ENCODE measurements at regions of chr7 and their contacts with region 1.

Region 1: DNA sequence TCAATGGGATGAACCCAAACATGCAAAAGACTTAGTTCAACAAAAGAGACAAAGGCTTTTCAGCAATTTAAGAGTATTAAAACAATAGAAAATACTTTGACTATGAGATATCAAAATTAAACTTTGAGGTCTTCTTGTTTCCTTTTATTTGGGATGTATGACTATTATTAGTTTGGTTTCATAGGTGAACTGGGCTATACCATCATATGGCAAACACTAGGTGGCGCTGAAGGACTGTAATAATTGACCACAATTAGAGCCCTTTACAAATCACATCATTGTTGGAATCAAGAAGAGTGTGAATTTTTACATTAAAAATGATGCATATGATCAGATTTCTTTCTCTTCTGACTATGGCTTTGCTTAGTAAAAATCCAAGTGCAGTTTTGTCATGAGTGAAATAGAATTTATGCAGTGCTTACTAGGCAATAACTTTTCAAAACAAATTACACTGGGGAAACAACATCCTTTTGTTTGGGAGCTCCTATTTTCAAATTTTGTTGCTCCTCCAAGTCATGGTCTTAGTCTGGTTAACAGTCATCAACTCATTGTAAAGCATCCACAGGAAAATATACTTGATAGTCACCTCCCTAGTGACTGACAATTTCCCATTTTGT is 14.7 kb upstream of the NXPH1 start:
- DNase-seq: no peak
- H3K4me3 Mint-ChIP-seq: no peak overlapping the region
- H3K27ac Mint-ChIP-seq: no peak overlapping the region
- H3K4me1 Mint-ChIP-seq: no peaks in the 10 kb centered on the region
- H3K27me3 Mint-ChIP-seq: no peaks in the 10 kb centered on the region

Region 2: DNA sequence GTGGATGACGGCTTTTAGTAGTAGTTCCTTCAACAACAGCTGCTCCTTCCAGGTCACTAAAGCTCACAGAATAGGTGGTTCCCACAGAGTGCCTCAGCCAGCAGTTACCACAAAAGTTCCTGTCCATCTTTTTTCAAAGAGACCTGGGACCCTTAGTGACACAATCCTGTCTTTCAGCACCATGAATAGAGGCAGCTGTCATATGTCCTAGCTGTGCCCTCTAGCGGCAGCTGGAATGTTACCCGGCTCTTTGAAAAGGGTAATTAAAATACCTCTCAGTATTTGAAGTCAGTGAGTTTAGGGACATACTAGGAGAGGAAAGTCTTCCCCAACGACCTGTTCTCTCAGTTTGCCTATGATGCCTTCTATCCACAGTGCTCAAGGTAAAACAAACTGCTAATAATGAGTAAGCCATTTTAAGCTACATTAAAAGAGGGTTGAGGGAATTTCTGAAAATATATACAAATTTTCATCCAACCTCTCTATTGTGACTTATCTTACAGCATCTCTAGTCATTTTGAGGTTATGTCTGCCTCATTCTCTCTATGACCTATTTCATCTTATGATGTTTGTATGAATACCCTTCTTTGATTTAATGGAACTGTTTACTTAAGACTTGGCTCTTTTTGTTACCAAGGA is 305.5 kb after region 1 on chr7:
- intact Hi-C with region 1: loop called (anchors 5 kb)
- DNase-seq: no peak
- H3K4me3 Mint-ChIP-seq: no peak overlapping the region
- H3K27ac Mint-ChIP-seq: no peak overlapping the region
- H3K4me1 Mint-ChIP-seq: no peaks in the 10 kb centered on the region
- H3K27me3 Mint-ChIP-seq: no peaks in the 10 kb centered on the region

Region 3: DNA sequence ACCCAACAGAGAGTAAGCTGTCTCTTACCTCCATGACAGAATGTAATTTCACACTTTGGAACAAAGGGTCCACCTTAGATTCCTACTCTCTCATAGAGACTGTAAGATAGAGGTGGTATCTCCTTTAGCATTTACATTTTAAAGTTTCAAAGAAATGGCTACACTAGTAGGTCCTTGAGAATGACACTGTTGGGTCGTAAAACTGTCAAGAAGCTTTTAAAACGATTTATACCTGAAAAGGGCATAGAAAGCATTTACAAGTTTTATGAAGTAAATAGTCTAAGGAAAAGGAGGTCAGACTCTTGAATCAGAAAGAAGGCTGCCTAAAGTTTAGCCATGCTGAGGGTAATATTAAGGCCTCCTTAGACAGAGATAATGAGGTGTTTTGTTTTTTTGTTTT is 1342.5 kb after region 1 on chr7:
- intact Hi-C with region 1: no loop called
- DNase-seq: no peak
- H3K4me3 Mint-ChIP-seq: no peak overlapping the region
- H3K27ac Mint-ChIP-seq: no peak overlapping the region
- H3K4me1 Mint-ChIP-seq: no peaks in the 10 kb centered on the region
- H3K27me3 Mint-ChIP-seq: no peaks in the 10 kb centered on the region

Measured in activated T-helper 2 cell treated with anti-CD3 and anti-CD28 coated beads, Interferon-gamma antibody, Interleukin-2, Interleukin-4, amounts not matched to agents 10 μg/mL and 5 μg/mL and 100 μg/mL, durations not matched to agents 14 hours and 24 hours and 36 hours (primary cell).